ENCODE measurements at regions of chr11 and their contacts with region 1.

Region 1: GRCh38 chr11:8354622-8355415 is 91.1 kb upstream of the LMO1 start:
- DNase-seq: no peak
- ATAC-seq: peak; percentile 11; the same call in 1 of the 2 replicates
- H3K4me3 Mint-ChIP-seq: no peak overlapping the region
- H3K27ac Mint-ChIP-seq: no peak overlapping the region; the same call in 1 of the 2 replicates
- H3K4me1 Mint-ChIP-seq: peaks cover 15% of the 10 kb centered on the region
- H3K27me3 Mint-ChIP-seq: no peaks in the 10 kb centered on the region; the same call in 1 of the 2 replicates
- CTCF ChIP-seq: no peak

Region 2: DNA sequence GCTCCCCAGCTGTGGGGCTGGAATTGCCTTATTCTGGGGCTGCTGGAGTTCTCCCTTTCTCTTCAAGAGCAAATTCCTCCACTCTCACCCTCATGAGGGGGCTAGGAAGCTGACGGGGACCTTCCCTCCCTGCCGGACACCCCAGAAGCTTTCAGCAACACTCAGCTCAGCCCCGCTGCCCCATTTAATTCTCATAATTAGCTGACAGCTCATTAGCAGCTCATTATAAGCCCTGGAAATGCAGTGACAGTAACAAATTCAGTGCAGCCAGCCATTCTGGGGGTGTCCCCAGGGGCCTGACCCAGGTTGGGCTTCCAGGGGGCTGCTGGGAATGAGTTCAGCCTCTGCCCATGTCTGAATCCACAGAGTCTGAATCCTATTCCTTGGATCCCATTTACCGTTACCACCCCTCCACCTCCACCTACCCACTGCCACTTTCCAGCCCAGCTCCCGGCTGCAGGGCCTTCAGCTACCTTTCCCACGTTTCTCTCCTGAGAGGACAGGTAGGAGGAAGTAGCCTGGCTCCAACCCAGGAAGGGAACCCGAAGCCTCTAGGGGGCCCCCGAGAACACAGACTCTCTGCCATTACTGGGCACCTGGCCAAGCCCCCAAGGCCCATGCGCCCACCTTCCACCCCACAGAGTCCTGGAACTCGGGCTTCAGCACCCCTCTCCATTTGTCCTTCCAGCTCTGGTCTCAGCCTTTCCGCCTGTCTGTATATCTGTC is 10.6 kb after region 1 on chr11:
- CTCF ChIA-PET with region 1: interaction called, 10 read pairs
- POLR2A ChIA-PET with region 1: no interaction called
- DNase-seq: peak; percentile 64
- ATAC-seq: peak; percentile 82
- H3K4me3 Mint-ChIP-seq: no peak overlapping the region
- H3K27ac Mint-ChIP-seq: no peak overlapping the region
- H3K4me1 Mint-ChIP-seq: no peaks in the 10 kb centered on the region
- H3K27me3 Mint-ChIP-seq: no peaks in the 10 kb centered on the region
- CTCF ChIP-seq: no peak

Region 3: DNA sequence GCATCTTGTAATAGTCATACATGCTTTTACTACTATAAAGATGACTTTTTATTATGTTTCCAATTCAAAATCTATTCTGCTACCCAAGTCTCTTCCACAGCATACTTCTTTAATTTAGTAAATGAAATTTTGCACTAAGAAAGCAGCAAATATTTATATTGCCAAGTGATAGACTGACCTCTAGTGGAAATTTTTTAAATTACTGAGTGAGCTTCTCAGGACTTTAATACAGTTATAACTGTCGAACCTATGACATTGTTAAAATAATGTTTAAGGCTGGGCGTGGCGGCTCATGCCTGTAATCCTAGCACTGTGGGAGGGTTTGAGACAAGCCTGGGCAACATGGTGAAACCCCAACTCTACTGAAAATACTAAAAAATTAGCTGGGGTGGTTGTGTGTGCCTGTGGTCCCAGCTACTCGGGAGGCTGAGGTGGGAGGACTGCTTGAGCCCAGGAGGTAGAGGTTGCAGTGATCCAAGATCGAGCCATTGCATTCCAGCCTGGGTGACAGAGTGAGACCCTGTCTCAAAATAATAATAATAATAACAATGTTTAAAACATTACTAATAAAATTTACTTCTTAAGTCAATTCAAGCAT is 211.9 kb after region 1 on chr11:
- CTCF ChIA-PET with region 1: interaction called, 12 read pairs
- POLR2A ChIA-PET with region 1: no interaction called
- DNase-seq: no peak
- ATAC-seq: no peak; the same call in 1 of the 2 replicates
- H3K4me3 Mint-ChIP-seq: no peak overlapping the region
- H3K27ac Mint-ChIP-seq: no peak overlapping the region
- H3K4me1 Mint-ChIP-seq: no peaks in the 10 kb centered on the region
- H3K27me3 Mint-ChIP-seq: no peaks in the 10 kb centered on the region
- CTCF ChIP-seq: peak; percentile 34